ENCODE measurements at regions of chr6 and their contacts with region 1.

Region 1: GRCh38 chr6:74826263-74826662 is 379.6 kb downstream of the COL12A1 start:
- DNase-seq: no peak
- H3K4me3 ChIP-seq: no peak overlapping the region
- H3K27ac ChIP-seq: no peak overlapping the region
- H3K4me1 ChIP-seq: peaks cover 0 to 3% (median 0%) of the 10 kb centered on the region in 4 donors
- H3K27me3 ChIP-seq: no peaks in the 10 kb centered on the region
- CTCF ChIP-seq: no peak

Region 2: GRCh38 chr6:74651948-74652347 is 174.3 kb before region 1 on chr6:
- intact Hi-C with region 1: no loop called
- DNase-seq: no peak
- H3K4me3 ChIP-seq: no peak overlapping the region
- H3K27ac ChIP-seq: no peak overlapping the region
- H3K4me1 ChIP-seq: no peaks in the 10 kb centered on the region
- H3K27me3 ChIP-seq: no peaks in the 10 kb centered on the region
- CTCF ChIP-seq: no peak

Region 3: DNA sequence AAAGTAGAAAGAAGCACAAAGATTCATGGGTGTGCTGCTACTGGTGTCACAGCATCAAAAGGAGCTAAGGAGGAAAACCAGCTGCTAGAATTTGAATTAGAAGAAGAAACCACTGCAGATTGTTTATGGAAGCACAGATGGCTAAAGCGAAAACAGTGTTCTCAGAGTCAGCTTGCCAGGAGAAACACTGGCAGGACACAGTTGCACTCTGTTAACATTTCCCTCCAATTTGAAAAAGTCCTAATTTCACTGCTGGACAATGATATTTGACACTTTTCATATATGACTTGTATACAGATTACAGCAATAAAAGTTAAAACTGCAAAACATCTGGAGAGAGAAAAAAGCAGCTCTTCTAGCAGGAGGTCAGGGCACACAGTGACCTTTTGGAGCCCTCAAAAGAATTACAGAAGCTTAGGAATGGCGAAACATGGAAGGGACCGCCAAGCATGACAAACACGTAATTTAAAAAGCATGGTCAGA is 65.1 kb after region 1 on chr6:
- intact Hi-C with region 1: no loop called
- DNase-seq: peak; percentile 46 to 64
- H3K4me3 ChIP-seq: no peak overlapping the region
- H3K27ac ChIP-seq: peak overlapping the region; percentile 11 to 29
- H3K4me1 ChIP-seq: peaks cover 0 to 31% (median 16%) of the 10 kb centered on the region in 4 donors
- H3K27me3 ChIP-seq: no peaks in the 10 kb centered on the region
- CTCF ChIP-seq: no peak

Region 4: GRCh38 chr6:75098709-75099108 is 272.4 kb after region 1 on chr6:
- intact Hi-C with region 1: no loop called
- DNase-seq: peak; percentile 79 to 87
- H3K4me3 ChIP-seq: no peak overlapping the region
- H3K27ac ChIP-seq: peak overlapping the region; percentile 39 to 48
- H3K4me1 ChIP-seq: peaks cover 0 to 49% (median 16%) of the 10 kb centered on the region in 4 donors
- H3K27me3 ChIP-seq: no peaks in the 10 kb centered on the region
- CTCF ChIP-seq: no peak

Region 5: DNA sequence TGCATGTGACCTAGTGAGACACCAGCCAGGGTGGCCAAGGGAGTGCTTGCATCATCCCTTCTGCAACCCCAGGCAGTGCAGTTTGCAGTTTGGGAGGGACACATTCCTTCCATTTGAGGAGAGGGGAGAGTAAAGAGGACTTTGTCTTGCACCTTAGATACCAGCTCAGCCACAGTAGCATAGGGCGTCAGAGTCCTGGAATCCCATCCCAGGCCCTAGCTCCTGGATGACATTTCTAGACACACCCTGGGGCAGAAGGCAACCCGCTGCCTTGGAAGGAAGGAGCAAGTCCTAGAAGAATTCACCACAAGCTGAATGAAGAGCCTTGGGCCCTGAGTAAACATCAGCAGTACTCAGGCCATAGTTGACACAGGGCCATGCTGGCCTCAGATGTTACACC is 1926.6 kb after region 1 on chr6:
- intact Hi-C with region 1: loop called (anchors 5 kb)
- DNase-seq: no peak
- H3K4me3 ChIP-seq: no peak overlapping the region
- H3K27ac ChIP-seq: no peak overlapping the region
- H3K4me1 ChIP-seq: no peaks in the 10 kb centered on the region
- H3K27me3 ChIP-seq: no peaks in the 10 kb centered on the region
- CTCF ChIP-seq: no peak